H1 (cell line): ENCODE measurements at regions of chr2 and their contacts with region 1.

Region 1: DNA sequence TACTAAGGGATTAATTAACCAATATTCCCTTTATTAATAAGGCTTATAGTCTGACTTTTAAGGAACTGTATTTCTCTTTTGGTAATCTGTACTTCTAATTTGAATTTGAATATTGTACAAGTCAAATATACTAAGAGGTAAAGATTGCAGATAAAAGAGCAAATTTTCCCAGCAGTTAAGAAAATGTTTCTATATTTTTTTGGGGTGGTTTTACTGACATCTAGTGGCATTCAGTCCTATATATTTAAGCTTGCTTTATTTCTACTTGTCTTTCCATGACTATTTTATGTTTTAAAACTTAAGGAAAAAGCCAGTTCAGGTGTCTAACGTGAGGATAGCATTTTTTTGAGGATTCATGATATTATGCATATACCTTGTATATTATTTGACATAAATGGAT is 41.6 kb downstream of the TDRD15 start:
- DNase-seq: no peak
- H3K4me3 ChIP-seq: no peak overlapping the region
- H3K27ac ChIP-seq: no peak overlapping the region
- H3K4me1 ChIP-seq: no peaks in the 10 kb centered on the region
- H3K27me3 ChIP-seq: no peaks in the 10 kb centered on the region
- CTCF ChIP-seq: no peak; a peak in 1 of 4 replicates
- EP300 ChIP-seq: no peak
- POLR2A ChIP-seq: no peak
- RAD21 ChIP-seq: peak in 1 of 2 experiments; percentile 42; a peak in 3 of 4 replicates

Region 2: GRCh38 chr2:21175895-21176646 is 10.7 kb after region 1 on chr2:
- CTCF ChIA-PET with region 1: interaction called, 12 read pairs
- POLR2A ChIA-PET with region 1: no interaction called
- DNase-seq: no peak
- H3K4me3 ChIP-seq: no peak overlapping the region
- H3K27ac ChIP-seq: no peak overlapping the region
- H3K4me1 ChIP-seq: no peaks in the 10 kb centered on the region
- H3K27me3 ChIP-seq: no peaks in the 10 kb centered on the region
- CTCF ChIP-seq: peak in 2 of 3 experiments; percentile 3 to 6; a peak in 2 of 4 replicates
- EP300 ChIP-seq: no peak
- POLR2A ChIP-seq: no peak
- RAD21 ChIP-seq: peak; percentile 31 to 45

Region 3: GRCh38 chr2:21363364-21363763 is 198.0 kb after region 1 on chr2:
- CTCF ChIA-PET with region 1: no interaction called
- POLR2A ChIA-PET with region 1: no interaction called
- DNase-seq: no peak
- H3K4me3 ChIP-seq: no peak overlapping the region
- H3K27ac ChIP-seq: no peak overlapping the region
- H3K4me1 ChIP-seq: no peaks in the 10 kb centered on the region
- H3K27me3 ChIP-seq: no peaks in the 10 kb centered on the region
- CTCF ChIP-seq: no peak
- EP300 ChIP-seq: no peak
- POLR2A ChIP-seq: no peak
- RAD21 ChIP-seq: no peak